Ovary (tissue), 10 donors: ENCODE measurements at regions of chr5 and their contacts with region 1.

Region 1: GRCh38 chr5:141958113-141958512 is at the start of gene PCDH12:
- DNase-seq: peak in 1 of 5 donors; percentile 26
- H3K4me3 ChIP-seq: no peak within 1 kb of the TSS
- H3K27ac ChIP-seq: no peak within 1 kb of the TSS
- H3K4me1 ChIP-seq: no peaks in the 10 kb centered on the region
- H3K27me3 ChIP-seq: no peaks in the 10 kb centered on the region
- CTCF ChIP-seq: no peak
- EP300 ChIP-seq: no peak
- POLR2A ChIP-seq: no peak
- total RNA-seq, gene PCDH12: 0.61 to 3.6 (median 2.1) TPM

Region 2: DNA sequence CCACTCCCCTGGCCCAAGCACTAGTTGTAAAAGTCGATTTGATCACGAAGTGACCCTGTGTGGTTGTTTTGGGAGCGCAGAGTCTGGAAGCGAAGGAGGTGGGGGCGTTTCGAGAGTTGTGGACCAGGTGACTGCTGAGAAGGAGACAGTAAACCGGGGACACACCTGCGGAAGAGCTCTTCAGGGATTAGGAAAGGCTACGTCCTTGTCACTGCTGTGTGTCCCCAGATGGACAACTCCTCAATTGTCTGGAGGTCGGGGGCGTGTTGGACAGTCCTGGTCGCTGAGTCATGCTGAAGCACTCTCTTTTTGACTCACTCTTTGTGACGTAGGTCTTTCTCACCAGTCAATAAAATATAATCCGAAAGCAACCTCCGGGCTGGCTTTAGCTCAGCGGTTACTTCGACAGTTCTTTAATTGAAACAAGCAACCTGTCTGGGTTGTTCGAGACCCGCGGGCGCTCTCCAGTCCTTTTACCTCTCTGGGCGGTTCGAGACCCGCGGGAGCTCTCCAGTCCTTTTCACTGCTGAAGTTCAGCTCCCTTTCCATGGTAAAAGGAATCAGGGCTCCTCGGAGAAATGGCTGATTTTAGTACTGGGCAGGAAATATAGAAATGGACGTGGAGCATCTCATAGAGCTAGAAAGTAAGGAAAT is 1247.1 kb before region 1 on chr5:
- intact Hi-C with region 1: no loop called
- DNase-seq: peak; percentile 78 to 92 (median 81)
- H3K4me3 ChIP-seq: peak overlapping the region; percentile 46
- H3K27ac ChIP-seq: peak overlapping the region; percentile 93 to 95
- H3K4me1 ChIP-seq: no peaks in the 10 kb centered on the region
- H3K27me3 ChIP-seq: no peaks in the 10 kb centered on the region
- CTCF ChIP-seq: no peak
- EP300 ChIP-seq: no peak
- POLR2A ChIP-seq: peak; percentile 76

Region 3: GRCh38 chr5:141691867-141692532 is 266.1 kb before region 1 on chr5:
- intact Hi-C with region 1: loop called in 3 of 4 experiments (anchors 2 to 5 kb)
- DNase-seq: peak; percentile 72 to 90 (median 83)
- H3K4me3 ChIP-seq: no peak overlapping the region
- H3K27ac ChIP-seq: no peak overlapping the region
- H3K4me1 ChIP-seq: no peaks in the 10 kb centered on the region
- H3K27me3 ChIP-seq: no peaks in the 10 kb centered on the region
- CTCF ChIP-seq: peak; percentile 94 to 95 (median 95)
- EP300 ChIP-seq: no peak
- POLR2A ChIP-seq: no peak

Region 4: DNA sequence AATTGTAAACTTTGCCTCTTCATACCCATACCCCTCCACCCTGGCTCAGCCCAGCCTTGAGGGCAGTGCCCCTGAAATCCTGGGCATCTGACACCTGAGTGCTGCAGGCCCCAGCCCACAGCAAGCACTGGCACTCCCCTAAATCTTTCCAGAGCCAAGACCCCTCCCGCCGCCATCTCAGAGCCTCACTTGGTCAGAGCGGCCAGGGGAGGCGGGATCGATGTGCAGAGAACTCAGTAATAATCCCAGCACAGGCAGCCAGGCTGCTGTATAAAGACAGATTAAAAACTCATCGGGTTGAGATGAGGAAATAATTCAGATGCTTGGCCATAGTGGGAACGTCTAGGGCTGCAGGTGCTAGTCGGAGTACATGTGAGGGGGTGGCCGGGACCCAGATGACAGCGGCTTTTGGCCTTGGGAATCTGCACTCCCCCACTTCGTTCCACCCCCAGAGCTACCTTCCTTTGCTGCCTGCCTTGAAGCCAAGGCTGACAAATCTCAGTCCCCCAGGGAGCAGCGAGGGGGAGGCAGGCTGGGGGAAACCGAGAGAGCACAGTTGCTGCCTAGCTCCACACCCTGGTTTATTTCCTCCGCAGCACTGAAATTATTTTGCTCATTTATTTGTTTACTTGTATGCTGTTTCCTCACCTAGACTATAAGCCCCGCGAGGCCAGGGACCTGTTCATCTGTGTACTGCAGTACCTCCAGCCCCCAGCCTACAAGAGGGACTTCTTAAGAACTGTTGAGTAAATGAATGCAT is 256.6 kb before region 1 on chr5:
- intact Hi-C with region 1: loop called in 2 of 4 experiments (anchors 5 kb)
- DNase-seq: no peak
- H3K4me3 ChIP-seq: no peak overlapping the region
- H3K27ac ChIP-seq: no peak overlapping the region
- H3K4me1 ChIP-seq: no peaks in the 10 kb centered on the region
- H3K27me3 ChIP-seq: no peaks in the 10 kb centered on the region
- CTCF ChIP-seq: no peak
- EP300 ChIP-seq: no peak
- POLR2A ChIP-seq: no peak